Calu3 (cell line): ENCODE measurements at regions of chr7 and their contacts with region 1.

Region 1: DNA sequence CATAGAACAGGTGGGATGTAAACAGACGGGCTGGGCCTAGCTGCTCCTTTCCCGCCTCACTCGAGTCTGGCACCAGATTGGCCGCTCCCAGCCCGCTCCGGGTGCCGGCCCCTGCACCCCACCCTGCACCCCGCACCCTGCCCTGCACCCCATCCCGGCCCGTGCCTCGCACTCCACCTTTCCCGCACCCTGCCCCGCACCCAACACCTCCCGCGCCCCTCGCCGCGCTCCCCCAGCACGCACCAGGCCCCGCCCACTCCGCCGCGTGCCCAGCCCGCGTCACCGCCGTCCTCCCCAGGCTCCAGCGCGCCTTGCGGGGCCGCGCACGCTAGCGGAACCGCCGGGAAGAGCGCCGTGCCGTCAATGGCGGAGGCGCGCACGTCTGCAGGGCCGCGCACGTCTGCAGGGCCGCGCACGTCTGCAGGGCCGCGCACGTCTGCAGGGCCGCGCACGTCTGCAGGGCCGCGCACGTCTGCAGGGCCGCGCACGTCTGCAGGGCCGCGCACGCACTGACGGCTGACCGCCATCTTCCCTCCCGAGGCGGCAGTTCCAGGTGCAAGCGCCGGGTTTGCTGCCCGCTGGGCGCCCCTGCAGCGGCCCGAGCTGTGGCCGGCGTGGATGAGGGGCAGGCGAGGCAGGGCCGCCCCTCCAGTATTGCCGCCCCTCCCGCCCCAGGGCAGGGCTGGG is at the start of gene UBE3C:
- DNase-seq: peak; percentile 94
- H3K4me3 Mint-ChIP-seq: peak within 1 kb of the TSS; percentile 84
- H3K27ac Mint-ChIP-seq: peak within 1 kb of the TSS; percentile 63
- H3K4me1 Mint-ChIP-seq: peaks cover 45% of the 10 kb centered on the region
- H3K27me3 Mint-ChIP-seq: no peaks in the 10 kb centered on the region
- CTCF ChIP-seq: no peak
- total RNA-seq, gene UBE3C: 79.9 and 81.1 TPM in 2 replicates

Region 2: GRCh38 chr7:157009768-157010587 is 128.6 kb before region 1 on chr7:
- CTCF ChIA-PET with region 1: interaction called, 3 read pairs
- intact Hi-C with region 1: loop called (anchors 5 kb)
- DNase-seq: peak; percentile 49
- H3K4me3 Mint-ChIP-seq: peak overlapping the region; percentile 99
- H3K27ac Mint-ChIP-seq: peak overlapping the region; percentile 94
- H3K4me1 Mint-ChIP-seq: peaks cover 24% of the 10 kb centered on the region
- H3K27me3 Mint-ChIP-seq: no peaks in the 10 kb centered on the region
- CTCF ChIP-seq: no peak

Region 3: GRCh38 chr7:157027568-157028198 is 110.9 kb before region 1 on chr7:
- CTCF ChIA-PET with region 1: no interaction called
- intact Hi-C with region 1: loop called (anchors 5 kb)
- DNase-seq: peak; percentile 43
- H3K4me3 Mint-ChIP-seq: peak overlapping the region; percentile 57
- H3K27ac Mint-ChIP-seq: peak overlapping the region; percentile 85
- H3K4me1 Mint-ChIP-seq: peaks cover 34% of the 10 kb centered on the region
- H3K27me3 Mint-ChIP-seq: peaks cover 38% of the 10 kb centered on the region
- CTCF ChIP-seq: no peak

Region 4: DNA sequence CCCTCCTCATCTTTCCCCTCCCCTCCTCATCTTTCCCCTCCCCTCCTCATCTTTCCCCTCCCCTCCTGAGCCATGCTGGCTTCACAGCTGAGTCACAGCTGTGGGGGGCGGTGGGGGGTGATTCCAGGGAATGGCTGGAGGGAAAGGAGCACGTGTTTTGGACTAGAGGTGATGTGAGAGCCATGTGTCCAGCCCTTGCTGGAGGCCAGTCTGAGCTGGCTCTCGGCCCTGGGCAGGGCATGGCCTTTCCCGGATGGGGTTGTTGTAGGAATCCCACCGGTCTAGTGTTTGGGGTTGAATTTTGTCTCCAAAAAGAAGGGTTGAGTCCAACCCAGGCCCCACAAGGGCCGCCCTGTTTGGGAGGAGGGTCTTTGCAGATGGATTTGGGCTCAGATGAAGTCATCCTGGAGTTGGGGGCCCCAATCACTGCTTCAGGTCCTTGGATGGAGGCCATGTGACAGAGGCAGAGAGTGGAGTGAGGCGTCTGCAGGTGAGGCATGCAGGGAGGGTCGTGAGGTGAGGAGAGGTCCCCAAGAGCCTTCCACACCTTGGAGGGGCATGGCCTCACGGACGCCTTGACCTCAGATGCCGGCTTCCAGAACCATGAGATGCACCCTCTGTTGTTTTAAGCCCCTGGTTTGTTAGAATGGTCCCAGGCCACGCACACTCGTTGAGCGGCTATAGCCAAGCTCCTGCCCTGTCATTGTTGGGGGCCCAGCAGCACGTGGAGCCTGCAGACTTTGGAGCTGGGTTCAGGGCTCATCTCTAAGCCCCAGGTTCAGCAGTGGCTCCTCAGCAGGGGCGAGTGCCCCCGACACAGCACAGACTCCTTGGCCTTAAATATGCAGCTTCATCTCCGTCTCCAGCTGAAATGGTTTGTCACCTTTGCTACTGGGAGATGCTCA is 299.8 kb after region 1 on chr7:
- CTCF ChIA-PET with region 1: no interaction called
- intact Hi-C with region 1: no loop called
- DNase-seq: no peak
- H3K4me3 Mint-ChIP-seq: no peak overlapping the region
- H3K27ac Mint-ChIP-seq: no peak overlapping the region
- H3K4me1 Mint-ChIP-seq: no peaks in the 10 kb centered on the region
- H3K27me3 Mint-ChIP-seq: no peaks in the 10 kb centered on the region
- CTCF ChIP-seq: no peak